T-cell (primary cell): ENCODE measurements at regions of chr4 and their contacts with region 1.

Region 1: GRCh38 chr4:21090094-21090666 is 389.9 kb downstream of the PACRGL start:
- DNase-seq: no peak
- ATAC-seq: no peak
- H3K4me3 ChIP-seq: no peak overlapping the region
- H3K4me3 Mint-ChIP-seq: no peak overlapping the region
- H3K27ac ChIP-seq: no peak overlapping the region
- H3K27ac Mint-ChIP-seq: no peak overlapping the region
- H3K4me1 ChIP-seq: no peaks in the 10 kb centered on the region
- H3K4me1 Mint-ChIP-seq: peaks cover 0 to 7% (median 0%) of the 10 kb centered on the region in 3 donors
- H3K27me3 ChIP-seq: no peaks in the 10 kb centered on the region
- H3K27me3 Mint-ChIP-seq: no peaks in the 10 kb centered on the region

Region 2: DNA sequence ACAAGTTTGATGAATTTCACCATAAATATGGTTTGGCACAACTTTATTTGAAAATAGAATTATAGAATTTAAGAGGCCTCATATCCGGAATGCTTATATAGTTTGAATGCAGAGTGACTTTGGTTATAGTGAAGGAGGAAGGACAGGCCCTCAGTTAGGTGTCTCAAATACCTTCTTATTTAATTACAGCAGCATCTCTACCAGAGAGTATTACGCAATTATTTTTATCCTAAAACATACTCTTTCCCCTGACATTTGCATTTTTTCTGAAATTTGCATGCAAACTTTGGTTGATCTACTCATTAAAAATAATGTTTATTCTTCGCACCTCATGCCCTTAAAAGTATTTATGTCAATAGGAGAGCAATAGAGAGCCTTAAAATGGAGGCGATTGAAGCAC is 84.5 kb before region 1 on chr4:
- CTCF ChIA-PET with region 1: no interaction called
- POLR2A ChIA-PET with region 1: interaction called in 1 of 2 experiments, 13 read pairs
- DNase-seq: no peak
- ATAC-seq: no peak
- H3K4me3 ChIP-seq: no peak overlapping the region
- H3K4me3 Mint-ChIP-seq: no peak overlapping the region
- H3K27ac ChIP-seq: no peak overlapping the region
- H3K27ac Mint-ChIP-seq: no peak overlapping the region
- H3K4me1 ChIP-seq: no peaks in the 10 kb centered on the region
- H3K4me1 Mint-ChIP-seq: peaks cover 0 to 19% (median 6%) of the 10 kb centered on the region in 3 donors
- H3K27me3 ChIP-seq: no peaks in the 10 kb centered on the region
- H3K27me3 Mint-ChIP-seq: no peaks in the 10 kb centered on the region

Region 3: GRCh38 chr4:21134994-21135393 is 44.8 kb after region 1 on chr4:
- CTCF ChIA-PET with region 1: no interaction called
- POLR2A ChIA-PET with region 1: no interaction called
- DNase-seq: peak in 1 of 35 experiments; percentile 29
- ATAC-seq: no peak
- H3K4me3 ChIP-seq: no peak overlapping the region
- H3K4me3 Mint-ChIP-seq: no peak overlapping the region
- H3K27ac ChIP-seq: no peak overlapping the region
- H3K27ac Mint-ChIP-seq: no peak overlapping the region
- H3K4me1 ChIP-seq: no peaks in the 10 kb centered on the region
- H3K4me1 Mint-ChIP-seq: no peaks in the 10 kb centered on the region
- H3K27me3 ChIP-seq: no peaks in the 10 kb centered on the region
- H3K27me3 Mint-ChIP-seq: no peaks in the 10 kb centered on the region

Region 4: GRCh38 chr4:21380861-21381260 is 290.7 kb after region 1 on chr4:
- CTCF ChIA-PET with region 1: no interaction called
- POLR2A ChIA-PET with region 1: no interaction called
- DNase-seq: no peak
- ATAC-seq: no peak
- H3K4me3 ChIP-seq: no peak overlapping the region
- H3K4me3 Mint-ChIP-seq: no peak overlapping the region
- H3K27ac ChIP-seq: no peak overlapping the region
- H3K27ac Mint-ChIP-seq: no peak overlapping the region
- H3K4me1 ChIP-seq: no peaks in the 10 kb centered on the region
- H3K4me1 Mint-ChIP-seq: no peaks in the 10 kb centered on the region
- H3K27me3 ChIP-seq: no peaks in the 10 kb centered on the region
- H3K27me3 Mint-ChIP-seq: no peaks in the 10 kb centered on the region